ENCODE measurements at regions of chr17 and their contacts with region 1.

Region 1: DNA sequence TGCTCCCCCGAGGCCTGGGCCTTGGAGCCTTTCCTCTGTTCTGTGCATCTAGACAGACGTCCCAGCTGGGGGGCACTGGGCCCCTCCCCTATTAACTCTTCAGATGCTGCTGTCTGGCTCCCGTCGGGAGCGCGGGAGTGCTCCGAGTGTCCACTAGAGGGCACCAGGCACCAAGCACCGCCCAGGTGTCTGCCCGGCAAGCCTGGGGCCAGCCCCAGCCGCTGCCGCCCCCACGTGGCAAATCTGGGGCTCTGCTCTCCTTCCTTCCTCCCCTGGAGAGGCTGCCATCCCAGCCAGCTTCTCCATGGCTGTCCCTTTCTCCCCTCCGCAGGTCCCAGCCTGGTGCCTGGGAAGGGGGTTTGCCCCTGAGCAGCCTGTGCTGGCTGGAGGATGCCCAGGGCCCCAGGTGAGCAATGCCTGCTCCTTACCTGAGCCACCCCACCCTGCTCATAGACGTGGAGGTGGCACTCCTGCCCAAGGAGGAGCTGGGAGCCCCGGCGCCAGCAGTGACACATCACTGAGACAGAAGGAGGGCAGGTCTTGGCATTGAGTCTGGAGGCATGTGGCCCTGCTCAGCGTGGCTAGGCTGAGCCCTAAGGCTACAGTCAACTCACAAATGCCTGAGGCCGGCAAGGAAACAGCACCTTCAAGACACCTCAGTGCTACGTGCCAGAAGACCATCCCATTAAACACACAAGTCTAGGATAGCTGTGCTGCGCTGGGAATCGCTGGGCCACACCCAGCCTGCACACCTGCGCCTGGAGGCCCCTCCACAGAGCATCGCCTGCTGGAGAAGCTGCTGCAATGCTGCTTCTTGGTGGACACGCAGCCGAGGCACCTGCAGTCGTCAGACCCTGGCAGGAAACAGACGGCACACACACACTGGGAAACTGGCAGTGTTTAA is 19.7 kb downstream of the TMEM235 start:
- DNase-seq: peak; percentile 94
- H3K27ac ChIP-seq: peak overlapping the region; percentile 38
- CTCF ChIP-seq: peak; percentile 100

Region 2: GRCh38 chr17:78237401-78238012 is 13.6 kb before region 1 on chr17:
- CTCF ChIA-PET with region 1: interaction called, 14 read pairs
- POLR2A ChIA-PET with region 1: no interaction called
- DNase-seq: no peak
- H3K27ac ChIP-seq: peak overlapping the region; percentile 41
- CTCF ChIP-seq: no peak

Measured in RWPE1 (cell line).